ENCODE measurements at regions of chr15 and their contacts with region 1.

Region 1: DNA sequence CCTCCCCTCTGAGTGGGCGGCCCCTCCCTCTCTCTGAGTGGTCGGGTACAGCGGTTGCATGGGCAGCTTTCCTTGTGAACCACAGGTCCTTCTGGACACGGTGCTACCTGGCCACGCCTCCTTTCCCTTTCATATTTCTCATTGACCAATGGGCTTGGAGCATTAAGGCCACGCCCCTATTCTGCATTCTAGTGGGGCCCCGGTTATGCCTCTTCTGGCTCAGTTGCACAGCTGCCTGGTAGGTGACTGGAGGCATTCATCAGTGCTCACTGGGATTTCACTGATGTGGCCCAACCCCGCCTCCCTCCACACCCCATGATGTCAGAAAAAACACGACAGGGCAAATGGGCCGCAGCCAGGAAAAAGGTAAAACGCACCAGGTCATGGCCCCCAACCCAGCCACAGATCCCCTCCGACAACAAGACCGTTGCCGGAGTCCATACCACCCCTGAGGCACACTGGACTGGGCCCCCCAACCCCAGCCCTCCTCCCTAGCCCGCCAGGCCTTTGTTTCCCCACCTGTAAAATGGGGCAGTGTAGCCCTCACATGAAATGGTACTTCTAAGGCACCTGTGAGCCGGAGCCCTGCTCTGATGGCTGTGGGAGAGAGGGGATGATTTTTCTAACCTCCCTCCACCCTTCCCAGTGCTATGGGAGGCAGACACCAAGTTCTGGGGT is 26.3 kb downstream of the NGRN start:
- DNase-seq: no peak
- H3K4me3 ChIP-seq: no peak overlapping the region
- CTCF ChIP-seq: no peak

Region 2: GRCh38 chr15:90106522-90107117 is 185.2 kb before region 1 on chr15:
- CTCF ChIA-PET with region 1: no interaction called
- POLR2A ChIA-PET with region 1: no interaction called
- DNase-seq: no peak
- H3K4me3 ChIP-seq: no peak overlapping the region
- CTCF ChIP-seq: no peak

Region 3: DNA sequence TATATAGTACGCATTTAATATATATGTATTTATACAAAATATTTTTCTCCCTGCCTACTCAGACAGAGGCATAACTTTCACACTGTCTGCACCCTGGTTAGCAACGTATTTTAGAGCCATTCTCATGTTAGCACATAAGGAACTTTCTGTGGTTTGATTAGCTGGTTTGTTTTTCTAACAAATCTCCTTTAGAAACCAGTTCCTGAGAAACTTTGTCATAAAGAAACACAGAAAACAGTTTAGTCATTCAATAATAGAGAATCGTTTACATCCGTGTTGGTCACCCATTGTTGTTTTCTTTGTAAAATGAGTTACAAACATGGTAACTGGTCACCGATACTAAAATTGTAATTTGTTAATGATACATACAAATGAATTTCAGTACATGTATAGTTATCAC is 32.3 kb before region 1 on chr15:
- CTCF ChIA-PET with region 1: no interaction called
- POLR2A ChIA-PET with region 1: no interaction called
- DNase-seq: no peak
- H3K4me3 ChIP-seq: no peak overlapping the region
- CTCF ChIP-seq: no peak

Region 4: DNA sequence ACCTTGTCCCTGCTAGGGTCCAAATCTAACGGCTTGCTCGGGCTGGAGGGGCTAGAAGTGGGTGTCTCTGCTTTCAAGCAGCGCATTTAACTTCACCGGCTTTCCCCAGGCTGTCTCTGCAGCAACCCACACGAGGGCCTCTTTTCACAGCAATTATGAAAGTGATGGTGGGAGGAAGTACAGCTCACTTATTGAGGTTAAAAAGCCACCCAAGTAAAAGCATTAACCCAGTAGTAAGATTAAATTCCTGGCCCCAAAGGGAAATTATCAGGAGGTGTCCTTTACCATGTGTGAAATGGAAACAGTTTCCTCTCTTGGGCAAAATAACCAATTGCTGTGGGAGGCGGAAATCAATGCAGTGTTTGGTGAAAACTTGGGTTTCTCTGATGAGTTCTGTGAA is 14.7 kb after region 1 on chr15:
- CTCF ChIA-PET with region 1: interaction called, 26 read pairs
- POLR2A ChIA-PET with region 1: no interaction called
- DNase-seq: no peak
- H3K4me3 ChIP-seq: no peak overlapping the region
- CTCF ChIP-seq: no peak

Region 5: GRCh38 chr15:90326441-90326840 is 34.6 kb after region 1 on chr15:
- CTCF ChIA-PET with region 1: no interaction called
- POLR2A ChIA-PET with region 1: no interaction called
- DNase-seq: no peak
- H3K4me3 ChIP-seq: no peak overlapping the region
- CTCF ChIP-seq: no peak

Region 6: GRCh38 chr15:90580099-90580498 is 288.3 kb after region 1 on chr15:
- CTCF ChIA-PET with region 1: no interaction called
- POLR2A ChIA-PET with region 1: no interaction called
- DNase-seq: no peak
- H3K4me3 ChIP-seq: no peak overlapping the region
- CTCF ChIP-seq: no peak

Measured in AG04449 (cell line).